Adrenal gland (tissue), 19 donors: ENCODE measurements at regions of chr15 and their contacts with region 1.

Region 1: DNA sequence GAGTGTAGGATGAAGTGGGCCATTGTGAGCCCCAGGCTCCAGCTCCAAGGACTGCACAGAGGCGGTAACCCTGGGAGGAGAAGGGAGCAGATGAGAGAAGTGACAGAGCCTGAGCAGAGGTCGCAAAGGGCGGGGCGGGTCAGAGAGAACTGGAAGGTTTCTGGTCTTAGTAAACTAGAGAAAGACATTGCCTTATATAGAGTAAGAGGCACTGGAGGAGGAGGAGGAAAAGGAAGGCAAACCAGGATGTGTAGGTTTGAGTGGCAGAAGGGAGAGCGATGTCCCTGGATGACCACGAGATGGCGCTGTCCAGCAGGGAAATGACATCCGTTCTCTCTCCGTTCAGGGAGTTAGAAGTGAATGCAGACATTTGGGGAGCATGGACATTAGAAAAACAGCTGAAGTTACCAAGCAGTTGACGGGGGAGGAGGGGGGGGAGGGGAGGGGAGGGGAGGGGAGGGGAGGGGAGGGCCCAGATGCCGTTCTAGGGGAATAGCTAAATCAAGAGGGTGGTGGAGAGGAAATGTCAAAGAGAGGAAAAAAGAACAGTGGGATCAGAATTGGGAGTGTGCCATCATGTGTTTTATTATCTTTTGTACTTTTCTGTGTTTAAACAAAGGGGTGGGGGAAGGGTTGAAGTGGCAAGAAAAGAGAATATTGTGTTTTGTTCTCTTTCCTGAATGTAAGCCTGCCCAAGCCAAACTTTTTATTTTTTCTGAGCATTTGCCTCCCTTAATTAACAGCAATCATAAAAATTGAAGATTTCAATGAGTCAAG is 48.8 kb downstream of the STARD5 start:
- DNase-seq: peak; percentile 58 to 83 (median 73)
- H3K4me3 ChIP-seq: no peak overlapping the region
- H3K27ac ChIP-seq: no peak overlapping the region
- H3K4me1 ChIP-seq: peaks cover 0 to 5% of the 10 kb centered on the region in 2 donors
- H3K27me3 ChIP-seq: no peaks in the 10 kb centered on the region
- CTCF ChIP-seq: peak; percentile 75 to 94 (median 86)
- POLR2A ChIP-seq: no peak

Region 2: DNA sequence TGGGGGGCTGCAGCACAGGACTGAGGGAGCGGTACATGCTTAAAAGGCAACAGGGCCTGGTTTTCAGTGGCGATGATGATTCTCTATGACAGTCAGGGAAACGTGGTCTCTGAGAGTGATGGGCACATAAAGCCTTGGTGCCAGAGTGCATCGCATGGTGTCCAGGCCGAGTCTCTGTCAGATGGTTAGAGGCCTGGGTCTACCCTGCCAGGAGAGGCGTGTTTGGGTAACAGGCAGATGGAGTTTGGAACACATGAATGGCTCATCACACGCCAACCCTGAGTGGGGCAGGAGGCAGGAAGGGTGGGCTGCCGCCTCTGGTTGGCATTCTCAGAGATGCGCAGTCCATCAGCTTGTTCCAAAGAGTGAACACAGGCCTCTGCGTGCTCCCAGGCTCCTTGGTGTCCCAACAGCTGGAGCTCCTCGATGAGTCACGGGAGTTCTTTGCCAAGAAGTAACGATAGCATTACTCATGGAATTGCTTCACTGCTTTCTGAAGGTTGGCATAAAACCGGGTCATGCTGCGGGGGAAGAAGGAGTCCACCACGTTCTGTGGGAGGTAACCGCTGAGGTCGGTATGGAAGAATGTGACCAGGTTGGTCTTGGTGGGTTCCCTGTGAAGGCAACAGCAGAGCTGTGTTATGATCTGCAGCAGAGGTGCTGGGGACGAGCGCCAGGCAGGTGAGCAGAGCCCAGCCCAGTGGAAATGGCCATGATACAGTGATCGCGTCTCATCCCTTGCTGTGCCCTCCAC is 37.8 kb after region 1 on chr15:
- intact Hi-C with region 1: no loop called
- DNase-seq: peak; percentile 86 to 96 (median 95)
- H3K4me3 ChIP-seq: no peak overlapping the region
- H3K27ac ChIP-seq: peak overlapping the region in 3 of 5 donors; percentile 22 to 74 (median 61)
- H3K4me1 ChIP-seq: peaks cover 8 to 14% of the 10 kb centered on the region in 2 donors
- H3K27me3 ChIP-seq: no peaks in the 10 kb centered on the region
- CTCF ChIP-seq: no peak
- POLR2A ChIP-seq: peak in 1 of 2 donors; percentile 14

Region 3: DNA sequence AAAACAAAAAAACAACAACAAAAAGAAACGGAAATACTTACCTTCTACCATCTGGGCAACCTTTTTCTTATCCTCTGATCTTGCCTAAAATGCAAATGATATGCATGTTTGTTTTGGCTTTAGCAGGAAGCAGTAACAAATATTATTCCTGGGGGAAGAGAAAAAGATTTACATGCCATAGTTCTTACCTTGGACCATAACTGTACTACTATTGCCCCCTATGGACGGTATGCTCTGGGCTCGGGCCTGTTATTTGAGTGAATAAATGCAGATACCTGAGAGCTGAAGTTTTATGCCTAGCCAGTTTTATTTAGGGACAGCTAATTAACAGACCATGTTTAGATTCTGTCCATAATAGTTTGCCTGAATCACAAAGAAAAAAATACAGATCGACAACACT is 61.4 kb after region 1 on chr15:
- intact Hi-C with region 1: loop called in 1 of 2 experiments (anchors 5 kb)
- DNase-seq: peak in 1 of 7 donors; percentile 12
- H3K4me3 ChIP-seq: no peak overlapping the region
- H3K27ac ChIP-seq: no peak overlapping the region
- H3K4me1 ChIP-seq: peaks cover 0 to 18% of the 10 kb centered on the region in 2 donors
- H3K27me3 ChIP-seq: no peaks in the 10 kb centered on the region
- CTCF ChIP-seq: peak in 3 of 6 experiments; percentile 10 to 23 (median 12)
- POLR2A ChIP-seq: no peak

Region 4: DNA sequence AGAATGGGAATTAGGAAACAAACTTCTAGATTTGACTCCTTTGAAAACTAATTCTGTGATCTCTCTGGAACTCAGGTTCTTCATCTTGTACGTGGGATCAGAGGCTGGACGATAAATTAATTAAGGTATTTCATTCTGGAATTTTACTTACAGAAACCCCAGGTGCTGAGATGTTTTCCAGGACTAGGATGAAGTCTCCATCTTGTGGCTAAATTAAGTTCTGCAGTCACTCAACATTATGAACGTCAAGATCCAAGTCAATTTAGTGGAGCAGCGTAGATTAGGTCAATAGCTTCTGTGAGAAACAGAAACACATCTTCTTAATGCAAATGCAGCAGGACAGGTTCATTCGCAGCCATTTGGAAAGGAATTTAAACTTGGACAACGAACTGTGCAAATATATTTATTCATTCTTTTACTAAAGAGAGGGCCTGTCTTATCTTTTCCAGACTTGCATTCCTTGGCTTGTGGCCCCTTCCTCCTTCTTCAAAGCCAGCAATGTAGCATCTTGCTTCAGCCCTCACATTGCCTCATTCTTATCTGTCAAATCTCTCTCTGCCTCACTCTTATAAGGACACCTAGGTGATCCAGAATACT is 125.6 kb after region 1 on chr15:
- intact Hi-C with region 1: loop called (anchors 2 to 5 kb)
- DNase-seq: peak in 1 of 7 donors; percentile 5
- H3K4me3 ChIP-seq: no peak overlapping the region
- H3K27ac ChIP-seq: no peak overlapping the region
- H3K4me1 ChIP-seq: no peaks in the 10 kb centered on the region
- H3K27me3 ChIP-seq: peaks cover 6% of the 10 kb centered on the region
- CTCF ChIP-seq: peak; percentile 65 to 88 (median 83)
- POLR2A ChIP-seq: no peak